Right ventricle myocardium inferior (tissue), 1 donor: ENCODE measurements at regions of chr7 and their contacts with region 1.

Region 1: GRCh38 chr7:98168181-98168905 is 42.9 kb upstream of the BHLHA15 start:
- DNase-seq: no peak
- ATAC-seq: peak; percentile 60

Region 2: DNA sequence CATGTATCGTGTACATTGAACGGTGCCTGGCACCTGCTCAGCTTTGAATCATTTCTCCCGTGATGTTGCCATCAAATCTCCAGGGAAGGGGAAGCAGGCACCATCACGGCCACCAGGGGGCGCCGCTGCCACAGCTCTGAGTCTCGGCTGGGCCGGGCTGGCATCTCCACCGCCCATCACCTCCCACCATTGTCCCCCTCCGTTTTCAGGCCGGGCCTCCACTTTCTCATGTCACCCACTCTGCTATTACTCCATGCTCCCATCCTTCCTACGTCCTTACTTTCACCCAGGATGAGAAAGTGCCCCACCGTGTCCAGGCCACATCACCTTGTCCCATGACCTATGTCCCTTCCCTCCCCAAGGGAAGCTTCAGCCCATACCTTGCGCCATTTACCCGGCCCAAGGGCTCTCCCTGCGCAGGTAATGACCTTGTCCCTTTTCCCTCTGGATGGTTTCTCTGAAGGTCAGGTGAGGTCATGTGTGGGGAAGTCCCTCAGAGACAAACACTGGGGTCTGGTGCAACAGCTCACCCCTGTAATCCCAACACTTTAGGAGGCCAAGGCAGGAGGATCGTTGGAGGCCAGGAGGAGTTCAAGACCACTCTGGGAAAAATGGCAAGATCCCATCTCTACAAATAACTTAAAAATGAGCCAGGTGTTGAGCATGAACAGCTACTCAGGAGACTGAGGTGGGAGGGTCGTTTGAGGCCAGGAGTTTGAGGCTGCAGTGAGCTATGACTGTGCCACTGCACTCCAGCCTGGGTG is 146.6 kb before region 1 on chr7:
- intact Hi-C with region 1: loop called (anchors 1 kb)
- DNase-seq: peak; percentile 90
- ATAC-seq: peak; percentile 63

Region 3: GRCh38 chr7:98448766-98449165 is 280.4 kb after region 1 on chr7:
- intact Hi-C with region 1: no loop called
- DNase-seq: no peak
- ATAC-seq: no peak